Spleen (tissue), 13 donors: ENCODE measurements at regions of chr16 and their contacts with region 1.

Region 1: GRCh38 chr16:14534546-14534945 is 95.5 kb downstream of the PARN start:
- DNase-seq: no peak
- H3K4me3 ChIP-seq: no peak overlapping the region
- H3K27ac ChIP-seq: no peak overlapping the region
- H3K4me1 ChIP-seq: no peaks in the 10 kb centered on the region
- H3K27me3 ChIP-seq: no peaks in the 10 kb centered on the region
- CTCF ChIP-seq: no peak
- POLR2A ChIP-seq: no peak

Region 2: DNA sequence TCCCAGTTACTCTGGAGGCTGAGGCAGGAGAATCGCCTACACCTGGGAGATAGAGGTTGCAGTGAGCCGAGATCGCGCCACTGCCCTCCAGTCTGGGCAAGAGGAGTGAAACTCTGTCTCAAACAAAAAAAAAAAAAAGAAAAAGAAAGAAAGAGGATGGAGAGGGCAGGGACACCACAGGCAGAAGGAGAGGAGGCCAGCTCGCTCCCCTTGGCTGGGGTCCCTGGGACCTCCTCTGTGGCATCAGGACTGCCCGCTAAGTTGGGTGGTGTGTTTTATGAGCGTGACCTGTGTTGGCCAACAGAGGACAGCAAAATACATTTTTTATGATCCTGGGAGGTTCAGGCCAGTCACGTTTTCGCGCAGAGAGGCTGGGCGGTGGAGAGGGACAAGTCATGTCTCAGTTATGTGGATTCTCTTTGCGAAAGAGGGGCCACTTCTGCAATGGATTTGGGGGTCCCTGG is 233.8 kb before region 1 on chr16:
- intact Hi-C with region 1: loop called (anchors 5 kb)
- DNase-seq: peak; percentile 79
- H3K4me3 ChIP-seq: peak overlapping the region in 4 of 8 donors; percentile 34 to 90 (median 81)
- H3K27ac ChIP-seq: peak overlapping the region in 2 of 8 donors; percentile 33 to 44
- H3K4me1 ChIP-seq: peaks cover 0 to 31% (median 27%) of the 10 kb centered on the region in 6 donors
- H3K27me3 ChIP-seq: peaks cover 0 to 40% (median 18%) of the 10 kb centered on the region in 7 donors
- CTCF ChIP-seq: peak in 9 of 11 experiments; percentile 33 to 78 (median 51)
- POLR2A ChIP-seq: no peak